Sigmoid colon (tissue), 7 donors: ENCODE measurements at regions of chr5 and their contacts with region 1.

Region 1: GRCh38 chr5:61658592-61659008 is 326.5 kb downstream of the ZSWIM6 start:
- DNase-seq: peak; percentile 88
- H3K4me3 ChIP-seq: no peak overlapping the region
- H3K27ac ChIP-seq: no peak overlapping the region
- H3K4me1 ChIP-seq: no peaks in the 10 kb centered on the region
- H3K27me3 ChIP-seq: no peaks in the 10 kb centered on the region
- CTCF ChIP-seq: peak; percentile 71 to 91 (median 89)
- EP300 ChIP-seq: no peak
- POLR2A ChIP-seq: no peak

Region 2: DNA sequence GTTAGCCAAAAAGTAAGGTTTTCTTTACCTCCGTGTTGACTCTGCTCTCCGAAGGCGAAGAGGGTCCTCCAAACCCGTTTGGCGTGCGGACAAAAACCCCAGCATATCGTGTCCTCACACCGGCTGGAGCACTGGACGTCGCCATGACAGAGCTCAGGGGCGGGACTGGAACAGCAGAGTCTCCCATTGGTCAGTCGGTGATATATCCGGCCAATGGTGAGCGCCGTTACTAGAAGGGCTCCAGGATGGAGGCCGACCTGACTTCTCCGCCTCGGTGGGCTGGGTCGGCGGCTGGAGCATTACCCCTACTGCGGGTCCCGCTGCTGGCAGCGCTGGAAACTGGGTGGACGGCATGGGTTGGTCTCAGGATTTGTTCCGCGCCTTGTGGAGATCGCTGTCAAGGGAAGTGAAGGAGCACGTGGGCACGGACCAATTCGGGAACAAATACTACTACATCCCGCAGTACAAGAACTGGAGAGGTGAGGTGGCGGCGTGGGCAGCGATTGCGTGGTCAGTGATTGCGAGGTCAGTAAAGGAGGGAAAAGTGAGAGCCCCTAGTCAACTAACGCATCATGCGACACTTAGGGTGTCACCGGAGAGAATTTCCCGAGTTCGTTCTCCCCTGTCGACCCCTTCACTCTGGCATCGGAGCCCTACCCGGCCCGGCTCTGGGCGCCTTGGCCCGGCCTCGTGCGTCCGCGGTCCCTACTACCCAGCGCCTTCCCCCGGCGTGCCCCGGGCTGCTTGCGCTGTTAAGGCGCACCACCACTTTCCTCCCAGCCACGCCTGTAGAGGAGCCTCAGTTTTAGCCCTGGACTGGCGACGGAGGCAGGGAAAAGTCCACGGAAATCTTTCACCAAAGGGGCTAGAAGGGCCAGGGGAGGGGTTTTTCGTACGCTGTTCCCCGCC is 713.4 kb before region 1 on chr5 and contains the starts of genes ERCC8 and NDUFAF2:
- intact Hi-C with region 1: loop called (anchors 10 kb)
- DNase-seq: peak; percentile 95
- H3K4me3 ChIP-seq: peak within 1 kb of the TSS; percentile 65 to 75 (median 71)
- H3K27ac ChIP-seq: peak within 1 kb of the TSS; percentile 85 to 87 (median 86)
- H3K4me1 ChIP-seq: peaks cover 0 to 25% (median 18%) of the 10 kb centered on the region in 4 donors
- H3K27me3 ChIP-seq: no peaks in the 10 kb centered on the region
- CTCF ChIP-seq: no peak
- EP300 ChIP-seq: no peak
- POLR2A ChIP-seq: peak; percentile 59 to 62
- total RNA-seq, gene ERCC8: 8.8 to 16.4 (median 14.2) TPM
- total RNA-seq, gene NDUFAF2: 33.5 to 45.1 (median 39.9) TPM

Region 3: DNA sequence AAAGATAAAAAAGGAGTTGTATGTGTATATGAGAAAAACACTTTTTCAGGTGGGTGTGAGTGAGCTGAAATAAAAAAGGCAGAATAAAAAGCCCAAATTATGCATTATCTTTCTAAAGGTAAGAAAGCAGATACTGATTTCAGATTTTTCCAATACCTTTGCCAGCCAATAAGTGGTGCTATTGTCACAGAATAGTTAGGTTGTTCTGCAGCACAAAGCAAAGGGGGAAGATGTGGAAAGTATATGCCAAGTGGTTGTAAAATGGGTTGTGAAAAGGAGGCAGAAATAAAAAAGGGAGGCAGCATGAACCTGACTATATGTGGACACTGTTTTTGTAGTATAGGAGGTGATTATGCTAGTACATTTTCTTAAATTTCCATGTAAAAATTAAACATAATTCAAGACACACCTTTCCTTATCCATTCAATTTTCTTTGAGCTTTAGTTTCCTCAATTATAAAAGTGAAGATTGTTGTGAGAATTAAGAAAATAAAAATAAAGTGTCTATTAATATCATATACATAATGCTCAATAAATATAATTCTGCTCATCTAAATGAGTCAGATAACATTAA is 603.1 kb before region 1 on chr5:
- intact Hi-C with region 1: loop called (anchors 5 kb)
- DNase-seq: no peak
- H3K4me3 ChIP-seq: no peak overlapping the region
- H3K27ac ChIP-seq: no peak overlapping the region
- H3K4me1 ChIP-seq: peaks cover 0 to 13% (median 7%) of the 10 kb centered on the region in 4 donors
- H3K27me3 ChIP-seq: no peaks in the 10 kb centered on the region
- CTCF ChIP-seq: peak in 3 of 4 experiments; percentile 19 to 54 (median 44)
- EP300 ChIP-seq: no peak
- POLR2A ChIP-seq: no peak

Region 4: GRCh38 chr5:61228691-61229280 is 429.8 kb before region 1 on chr5:
- intact Hi-C with region 1: no loop called
- DNase-seq: no peak
- H3K4me3 ChIP-seq: no peak overlapping the region
- H3K27ac ChIP-seq: no peak overlapping the region
- H3K4me1 ChIP-seq: no peaks in the 10 kb centered on the region
- H3K27me3 ChIP-seq: no peaks in the 10 kb centered on the region
- CTCF ChIP-seq: no peak
- EP300 ChIP-seq: no peak
- POLR2A ChIP-seq: no peak

Region 5: GRCh38 chr5:61933787-61934626 is 275.4 kb after region 1 on chr5:
- intact Hi-C with region 1: loop called (anchors 5 kb)
- DNase-seq: no peak
- H3K4me3 ChIP-seq: no peak overlapping the region
- H3K27ac ChIP-seq: no peak overlapping the region
- H3K4me1 ChIP-seq: peaks cover 0 to 9% (median 1%) of the 10 kb centered on the region in 4 donors
- H3K27me3 ChIP-seq: no peaks in the 10 kb centered on the region
- CTCF ChIP-seq: peak; percentile 53 to 74 (median 62)
- EP300 ChIP-seq: no peak
- POLR2A ChIP-seq: no peak